ENCODE measurements at regions of chr11 and their contacts with region 1.

Region 1: DNA sequence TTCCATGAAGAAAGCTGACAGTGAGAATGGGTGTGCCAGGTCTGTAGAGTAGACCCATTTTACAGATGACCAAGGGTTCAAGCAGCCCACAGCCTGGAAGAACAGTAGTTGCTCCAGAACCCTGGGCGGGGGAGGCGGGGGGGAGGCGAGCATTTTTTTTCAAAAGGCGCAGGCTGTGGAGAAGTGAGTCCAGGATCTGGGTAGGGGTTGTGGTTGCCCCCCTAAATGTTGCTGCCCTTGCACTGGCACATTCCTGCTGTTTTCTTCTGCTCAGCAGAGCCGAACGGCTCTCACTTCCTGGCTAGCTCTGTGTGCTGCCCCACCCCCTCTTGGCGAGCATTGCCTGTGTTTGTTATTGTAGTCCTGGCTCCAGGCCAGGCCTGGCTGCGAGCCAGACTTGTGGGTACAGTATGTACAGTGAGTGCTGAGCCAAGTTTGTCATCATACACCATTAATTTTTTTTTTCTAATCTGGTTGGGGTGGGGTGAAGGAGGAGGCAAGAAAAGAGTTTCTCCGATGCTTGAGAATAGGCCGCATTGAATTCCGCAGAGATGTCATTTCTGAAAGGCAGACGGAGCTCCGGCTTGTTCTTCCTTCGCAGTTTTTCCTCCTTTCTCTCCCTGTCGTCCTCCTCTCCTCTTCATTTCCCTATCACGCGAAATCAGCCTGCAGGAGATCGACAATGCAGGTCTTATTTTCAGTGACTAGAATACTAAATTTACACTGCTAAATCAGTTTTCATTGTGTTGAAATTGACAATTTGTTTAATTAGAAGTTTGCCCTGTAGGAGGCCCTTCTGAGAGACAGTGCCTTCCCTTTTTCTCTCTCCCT is 100.5 kb downstream of the ZBTB16 start:
- DNase-seq: peak; percentile 97 to 98 (median 98)
- H3K4me3 ChIP-seq: peak overlapping the region in 1 of 2 donors; percentile 26
- H3K4me3 Mint-ChIP-seq: peak overlapping the region; percentile 53 to 86 (median 82)
- H3K27ac ChIP-seq: peak overlapping the region; percentile 33
- H3K27ac Mint-ChIP-seq: peak overlapping the region; percentile 90 to 96 (median 95)
- H3K4me1 ChIP-seq: peaks cover 59% of the 10 kb centered on the region
- H3K4me1 Mint-ChIP-seq: peaks cover 57 to 89% (median 76%) of the 10 kb centered on the region in 4 donors
- H3K27me3 ChIP-seq: no peaks in the 10 kb centered on the region
- H3K27me3 Mint-ChIP-seq: no peaks in the 10 kb centered on the region

Region 2: DNA sequence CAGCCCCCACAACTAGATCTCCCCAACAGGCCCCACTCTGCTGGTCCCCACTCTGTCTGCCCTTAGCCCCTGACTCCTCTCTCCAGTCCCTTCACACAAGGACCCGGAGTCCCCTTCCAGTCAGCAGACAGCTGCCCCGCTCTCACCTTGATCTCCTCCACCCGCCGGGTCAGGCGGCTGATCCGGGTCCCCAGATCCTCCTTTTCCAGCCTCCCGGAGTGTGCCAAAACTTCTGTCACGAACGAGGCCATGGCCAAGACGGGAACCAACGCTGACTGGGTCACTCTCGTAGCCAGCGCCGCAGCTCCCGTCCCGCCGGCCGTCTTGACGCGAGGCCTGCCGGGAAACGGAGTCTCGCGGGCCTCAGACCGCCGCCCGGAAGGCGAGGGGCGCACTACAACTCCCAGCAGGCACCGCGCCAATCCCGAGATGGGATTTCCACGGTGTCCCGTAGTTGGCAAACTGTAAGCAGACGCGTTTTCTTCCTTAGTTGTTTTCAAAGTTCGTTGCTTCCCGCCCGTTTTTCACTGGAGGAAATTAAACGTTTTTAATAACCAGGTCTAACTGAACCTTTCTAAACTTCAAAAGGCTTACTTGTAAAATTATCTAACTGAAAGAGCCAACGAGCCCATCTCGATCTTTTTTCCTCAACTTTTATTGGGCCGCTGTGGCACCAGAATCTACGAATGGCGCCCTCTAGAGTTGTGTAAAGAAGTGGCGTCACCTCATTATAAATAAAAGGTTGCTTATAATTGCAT is 386.4 kb before region 1 on chr11 and contains the start of gene ZW10:
- CTCF ChIA-PET with region 1: no interaction called
- POLR2A ChIA-PET with region 1: no interaction called
- intact Hi-C with region 1: loop called (anchors 10 kb)
- DNase-seq: peak; percentile 90 to 92 (median 92)
- H3K4me3 ChIP-seq: peak within 1 kb of the TSS; percentile 64 to 91
- H3K4me3 Mint-ChIP-seq: peak within 1 kb of the TSS; percentile 89 to 99 (median 98)
- H3K27ac ChIP-seq: peak within 1 kb of the TSS; percentile 62
- H3K27ac Mint-ChIP-seq: peak within 1 kb of the TSS; percentile 88 to 98 (median 96)
- H3K4me1 ChIP-seq: peaks cover 19% of the 10 kb centered on the region
- H3K4me1 Mint-ChIP-seq: peaks cover 12 to 31% (median 22%) of the 10 kb centered on the region in 4 donors
- H3K27me3 ChIP-seq: no peaks in the 10 kb centered on the region
- H3K27me3 Mint-ChIP-seq: peaks cover 0 to 3% of the 10 kb centered on the region in 2 donors
- total RNA-seq, gene ZW10: 8.7 to 9.7 TPM

Region 3: GRCh38 chr11:114036156-114036811 is 123.7 kb before region 1 on chr11:
- CTCF ChIA-PET with region 1: interaction called, 7 read pairs
- POLR2A ChIA-PET with region 1: interaction called, 3 read pairs
- intact Hi-C with region 1: loop called (anchors 1 kb)
- DNase-seq: peak in 4 of 5 donors; percentile 51 to 54 (median 52)
- H3K4me3 ChIP-seq: no peak overlapping the region
- H3K4me3 Mint-ChIP-seq: peak overlapping the region in 5 of 8 donors; percentile 7 to 54 (median 28)
- H3K27ac ChIP-seq: no peak overlapping the region
- H3K27ac Mint-ChIP-seq: no peak overlapping the region
- H3K4me1 ChIP-seq: peaks cover 6% of the 10 kb centered on the region
- H3K4me1 Mint-ChIP-seq: peaks cover 0 to 9% (median 6%) of the 10 kb centered on the region in 4 donors
- H3K27me3 ChIP-seq: no peaks in the 10 kb centered on the region
- H3K27me3 Mint-ChIP-seq: no peaks in the 10 kb centered on the region

Region 4: GRCh38 chr11:114075891-114076441 is 84.1 kb before region 1 on chr11:
- CTCF ChIA-PET with region 1: interaction called, 3 read pairs
- POLR2A ChIA-PET with region 1: interaction called, 3 read pairs
- intact Hi-C with region 1: loop called (anchors 1 kb)
- DNase-seq: peak in 4 of 5 donors; percentile 48 to 64 (median 52)
- H3K4me3 ChIP-seq: no peak overlapping the region
- H3K4me3 Mint-ChIP-seq: peak overlapping the region in 7 of 8 donors; percentile 32 to 89 (median 71)
- H3K27ac ChIP-seq: no peak overlapping the region
- H3K27ac Mint-ChIP-seq: peak overlapping the region; percentile 4 to 93 (median 54)
- H3K4me1 ChIP-seq: peaks cover 72% of the 10 kb centered on the region
- H3K4me1 Mint-ChIP-seq: peaks cover 57 to 88% (median 72%) of the 10 kb centered on the region in 4 donors
- H3K27me3 ChIP-seq: no peaks in the 10 kb centered on the region
- H3K27me3 Mint-ChIP-seq: no peaks in the 10 kb centered on the region

Region 5: DNA sequence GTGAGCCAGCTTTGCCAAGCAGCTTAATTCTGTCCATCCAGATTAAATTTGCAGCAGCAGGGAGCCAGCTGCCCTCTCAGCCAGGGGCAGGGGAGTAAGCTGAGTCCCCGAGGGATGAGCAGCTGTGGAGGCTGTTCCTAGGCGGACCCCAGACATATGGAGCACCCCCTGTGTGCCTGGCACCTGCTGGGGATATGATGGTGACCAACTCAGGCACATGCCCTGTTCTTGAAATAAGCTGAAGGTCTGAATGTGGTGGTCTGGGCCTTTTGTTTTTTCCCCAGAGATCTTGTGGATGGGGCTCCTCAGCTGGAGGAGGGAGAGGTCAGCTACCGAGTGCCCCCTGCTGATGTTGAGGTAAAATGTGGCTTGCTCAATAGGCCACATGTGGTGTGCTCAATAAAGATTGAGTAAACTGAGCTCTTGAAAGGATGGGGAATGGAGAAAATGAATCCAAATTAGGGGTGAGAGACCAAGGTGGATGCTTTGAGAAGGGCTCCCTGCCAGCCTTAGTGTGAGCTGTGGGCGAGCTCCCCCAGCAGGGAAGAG is 32.9 kb after region 1 on chr11:
- CTCF ChIA-PET with region 1: interaction called, 106 read pairs
- POLR2A ChIA-PET with region 1: interaction called, 222 read pairs
- intact Hi-C with region 1: loop called (anchors 1 kb)
- DNase-seq: no peak
- H3K4me3 ChIP-seq: no peak overlapping the region
- H3K4me3 Mint-ChIP-seq: no peak overlapping the region
- H3K27ac ChIP-seq: no peak overlapping the region
- H3K27ac Mint-ChIP-seq: peak overlapping the region in 3 of 7 donors; percentile 34 to 94 (median 36)
- H3K4me1 ChIP-seq: peaks cover 8% of the 10 kb centered on the region
- H3K4me1 Mint-ChIP-seq: peaks cover 17 to 33% (median 21%) of the 10 kb centered on the region in 4 donors
- H3K27me3 ChIP-seq: no peaks in the 10 kb centered on the region
- H3K27me3 Mint-ChIP-seq: no peaks in the 10 kb centered on the region

Region 6: DNA sequence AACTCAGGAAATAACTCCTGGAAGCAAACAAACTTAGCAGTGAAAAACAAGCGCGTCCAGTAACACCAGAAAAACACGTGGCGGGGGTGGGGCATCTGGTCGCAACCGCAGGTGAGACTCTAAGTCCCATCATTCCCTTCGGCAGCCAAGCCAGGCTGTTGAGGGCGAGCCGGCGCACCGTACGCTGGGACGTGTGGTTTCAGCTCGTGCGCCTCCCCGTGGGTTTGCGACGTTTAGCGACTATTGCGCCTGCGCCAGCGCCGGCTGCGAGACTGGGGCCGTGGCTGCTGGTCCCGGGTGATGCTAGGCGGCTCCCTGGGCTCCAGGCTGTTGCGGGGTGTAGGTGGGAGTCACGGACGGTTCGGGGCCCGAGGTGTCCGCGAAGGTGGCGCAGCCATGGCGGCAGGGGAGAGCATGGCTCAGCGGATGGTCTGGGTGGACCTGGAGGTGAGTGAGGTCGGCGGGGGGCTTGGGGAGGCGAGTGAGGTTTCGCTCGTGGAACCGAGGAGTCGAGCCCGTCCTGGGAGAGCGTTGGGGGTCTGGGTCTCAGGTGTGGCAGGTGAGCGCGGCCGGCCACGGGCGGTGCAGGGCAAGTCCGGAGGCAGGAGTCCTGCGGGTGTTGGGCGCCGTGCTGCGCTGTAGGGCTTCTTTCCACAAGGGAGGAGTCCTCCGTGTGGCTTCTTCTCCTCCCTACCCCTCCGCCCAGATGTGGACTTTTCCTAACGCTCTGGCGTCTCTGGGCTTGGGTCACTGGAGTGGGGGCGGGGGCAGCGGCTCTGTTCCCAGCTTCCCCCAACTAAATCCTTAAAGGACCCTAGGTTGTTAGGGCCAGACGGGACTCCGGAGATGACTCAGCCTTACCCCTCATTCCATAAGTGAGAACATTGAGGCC is 279.5 kb after region 1 on chr11 and contains the start of gene REXO2:
- CTCF ChIA-PET with region 1: no interaction called
- POLR2A ChIA-PET with region 1: no interaction called
- intact Hi-C with region 1: loop called (anchors 5 kb)
- DNase-seq: peak; percentile 91 to 94 (median 93)
- H3K4me3 ChIP-seq: peak within 1 kb of the TSS; percentile 71 to 98
- H3K4me3 Mint-ChIP-seq: peak within 1 kb of the TSS; percentile 93 to 99 (median 98)
- H3K27ac ChIP-seq: peak within 1 kb of the TSS; percentile 73
- H3K27ac Mint-ChIP-seq: peak within 1 kb of the TSS; percentile 92 to 98 (median 95)
- H3K4me1 ChIP-seq: peaks cover 32% of the 10 kb centered on the region
- H3K4me1 Mint-ChIP-seq: peaks cover 26 to 34% (median 30%) of the 10 kb centered on the region in 4 donors
- H3K27me3 ChIP-seq: no peaks in the 10 kb centered on the region
- H3K27me3 Mint-ChIP-seq: no peaks in the 10 kb centered on the region
- total RNA-seq, gene REXO2: 64.8 to 70.4 TPM